Ovary (tissue), 10 donors: ENCODE measurements at regions of chr12 and their contacts with region 1.

Region 1: DNA sequence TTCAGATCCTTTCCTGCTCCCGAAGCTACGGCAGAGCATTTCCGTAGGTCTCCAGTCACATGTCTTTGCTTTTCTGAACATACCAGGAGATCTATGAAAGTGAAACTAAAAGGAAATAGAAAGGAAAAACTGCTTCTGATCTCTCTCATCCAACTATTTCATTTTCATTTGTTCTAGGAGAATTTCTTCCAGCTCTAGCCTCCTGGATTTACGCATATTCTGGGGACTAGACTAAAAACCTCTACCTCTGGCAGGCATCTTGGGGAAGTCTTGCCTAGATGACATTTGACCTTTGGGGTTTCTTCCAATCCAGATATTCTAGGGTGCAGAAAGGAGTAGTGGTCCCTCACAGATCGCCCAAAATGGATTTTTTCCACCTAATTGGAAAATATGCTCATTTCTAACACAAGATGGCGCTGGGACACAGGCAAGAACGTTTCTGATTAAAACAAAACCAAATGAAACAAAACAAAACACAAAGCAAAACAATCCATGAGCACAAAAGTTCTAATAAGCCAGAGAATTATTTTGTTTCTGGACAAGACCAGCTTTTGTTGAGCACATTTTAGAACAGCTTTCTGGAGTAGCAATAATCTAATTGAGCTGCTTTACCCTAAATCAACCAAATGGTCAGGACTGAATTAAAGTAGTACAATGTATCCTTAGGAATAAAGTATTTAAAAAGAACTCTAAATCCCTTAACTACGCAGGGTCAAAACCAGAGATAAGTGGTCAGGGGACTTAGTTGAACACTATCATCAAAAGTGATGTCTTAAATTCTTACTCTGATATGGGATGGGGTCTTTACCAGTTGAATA is 12.3 kb upstream of the PARP11 start:
- DNase-seq: peak in 3 of 5 donors; percentile 26 to 46 (median 29)
- H3K4me3 ChIP-seq: peak overlapping the region; percentile 43
- H3K27ac ChIP-seq: peak overlapping the region in 1 of 2 donors; percentile 67
- H3K4me1 ChIP-seq: peaks cover 2% of the 10 kb centered on the region
- H3K27me3 ChIP-seq: no peaks in the 10 kb centered on the region
- CTCF ChIP-seq: peak; percentile 72 to 92 (median 82)
- EP300 ChIP-seq: no peak
- POLR2A ChIP-seq: no peak

Region 2: DNA sequence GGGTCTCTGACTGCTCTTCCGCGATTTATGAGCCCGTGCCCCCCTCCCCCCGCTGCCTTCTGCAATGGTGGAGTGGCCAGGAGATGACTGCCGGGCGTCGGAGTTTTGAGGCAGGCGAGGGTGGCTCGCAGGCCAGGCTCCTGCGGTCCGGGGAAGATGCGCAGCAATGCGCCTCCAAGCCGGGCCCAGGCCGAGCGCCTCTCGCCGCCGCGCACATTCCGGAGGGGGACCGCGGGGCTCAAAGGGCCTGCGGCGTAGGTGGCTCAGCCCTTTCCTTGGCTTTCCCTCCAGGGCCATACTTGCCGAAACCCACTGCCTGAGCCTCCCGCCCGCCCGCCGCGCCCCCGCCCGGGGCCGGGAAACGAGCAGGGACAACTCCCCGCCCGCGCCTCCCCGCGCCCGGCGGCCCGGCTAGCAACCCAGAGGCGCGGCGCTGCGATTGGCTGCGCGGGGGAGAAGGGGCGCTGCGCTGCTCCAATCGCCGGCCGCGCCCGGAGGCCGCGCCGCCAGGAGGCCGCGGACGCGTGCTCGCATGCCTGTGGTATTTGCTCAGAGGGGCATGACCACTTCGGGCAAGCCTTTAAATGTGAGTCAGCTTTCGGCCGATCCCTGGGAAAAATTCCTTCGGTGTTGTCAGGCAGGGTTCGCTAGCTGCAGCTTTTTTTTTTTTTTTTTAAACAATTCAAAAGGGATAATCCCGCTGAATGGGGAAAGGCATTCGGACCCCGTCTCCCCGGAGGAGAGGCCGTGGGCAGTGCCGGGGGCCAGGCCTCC is 145.6 kb after region 1 on chr12:
- intact Hi-C with region 1: loop called in 2 of 4 experiments (anchors 5 kb)
- DNase-seq: peak; percentile 77 to 90 (median 86)
- H3K4me3 ChIP-seq: peak overlapping the region; percentile 57
- H3K27ac ChIP-seq: peak overlapping the region; percentile 23 to 33
- H3K4me1 ChIP-seq: peaks cover 7% of the 10 kb centered on the region
- H3K27me3 ChIP-seq: no peaks in the 10 kb centered on the region
- CTCF ChIP-seq: peak in 1 of 3 donors; percentile 18
- EP300 ChIP-seq: no peak
- POLR2A ChIP-seq: no peak

Region 3: DNA sequence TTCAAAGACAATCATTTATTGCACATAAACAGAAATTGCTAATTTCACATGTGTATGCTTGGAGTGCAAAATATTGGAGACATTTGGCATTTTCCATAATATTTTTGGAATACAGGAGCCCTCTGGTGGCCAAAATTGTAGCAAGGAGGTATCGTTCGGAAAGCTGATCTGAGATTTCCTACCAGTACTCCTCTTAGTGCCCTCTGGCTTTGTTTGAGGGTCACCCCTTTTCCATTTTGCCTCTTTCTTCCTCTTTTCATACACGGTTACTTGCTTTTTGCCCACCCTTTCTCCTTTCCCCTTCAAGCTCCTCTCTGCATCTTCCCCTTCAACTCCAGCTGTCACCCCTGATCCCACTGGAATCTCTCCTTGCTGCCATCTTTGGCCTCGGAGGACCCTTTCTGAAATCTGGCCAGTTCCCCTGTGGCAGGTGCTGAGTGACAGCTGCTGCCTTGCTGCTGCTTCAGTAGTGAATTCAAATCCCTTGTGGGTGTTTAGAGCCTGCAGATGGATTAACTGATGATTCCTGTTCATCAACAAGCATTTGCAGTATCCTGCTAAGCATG is 152.3 kb after region 1 on chr12:
- intact Hi-C with region 1: loop called (anchors 5 to 10 kb)
- DNase-seq: peak in 4 of 5 donors; percentile 22 to 55 (median 43)
- H3K4me3 ChIP-seq: no peak overlapping the region
- H3K27ac ChIP-seq: no peak overlapping the region
- H3K4me1 ChIP-seq: no peaks in the 10 kb centered on the region
- H3K27me3 ChIP-seq: no peaks in the 10 kb centered on the region
- CTCF ChIP-seq: peak in 2 of 3 donors; percentile 49 to 77
- EP300 ChIP-seq: no peak
- POLR2A ChIP-seq: no peak

Region 4: DNA sequence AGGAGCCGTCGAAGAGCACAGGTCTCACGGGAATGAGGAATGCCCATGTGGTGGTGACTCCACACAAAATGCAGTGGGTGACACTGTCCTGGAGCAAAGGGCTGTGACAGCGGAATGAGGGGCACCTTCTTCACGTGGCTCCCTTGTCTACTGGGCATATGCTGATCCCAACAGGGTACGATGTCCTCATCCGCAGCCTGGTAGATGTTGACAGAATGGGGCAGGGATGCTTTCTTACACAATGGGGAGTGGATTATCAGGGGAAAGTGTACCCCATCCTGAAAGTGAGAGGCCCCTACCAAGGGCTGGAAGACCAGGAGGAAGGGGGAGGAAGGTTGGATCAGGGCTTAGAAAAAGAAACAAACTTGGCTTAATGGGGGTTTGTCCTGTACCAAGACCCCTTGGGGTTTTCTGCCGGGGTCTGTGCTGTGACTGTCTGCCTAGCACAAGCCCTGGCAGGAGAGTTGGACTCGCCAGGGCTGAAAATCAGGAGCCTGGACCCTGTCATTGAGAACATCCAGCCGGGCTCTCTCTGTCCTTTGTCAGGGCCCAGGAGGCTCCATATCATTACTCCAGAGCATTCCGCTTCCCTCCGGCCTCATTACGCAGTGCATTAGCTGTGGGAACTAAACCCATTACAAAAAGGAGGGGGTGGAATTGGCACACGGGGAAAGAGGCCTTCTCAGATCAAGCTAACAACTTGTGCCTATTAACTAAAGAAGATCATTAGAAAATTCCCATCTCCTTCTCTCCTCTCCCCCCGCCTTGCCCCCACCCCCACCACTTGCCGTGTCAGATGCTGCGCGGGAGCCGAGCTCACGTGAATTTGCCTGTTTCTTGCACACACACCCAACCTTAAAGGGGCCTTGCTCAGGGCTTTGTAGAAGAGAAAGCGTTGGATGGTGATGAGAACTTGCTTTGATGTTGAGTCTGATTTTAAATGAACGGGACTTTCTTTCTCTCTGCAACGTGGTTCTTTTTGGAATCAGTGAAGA is 159.5 kb after region 1 on chr12:
- intact Hi-C with region 1: loop called in 2 of 4 experiments (anchors 5 to 10 kb)
- DNase-seq: no peak
- H3K4me3 ChIP-seq: no peak overlapping the region
- H3K27ac ChIP-seq: no peak overlapping the region
- H3K4me1 ChIP-seq: no peaks in the 10 kb centered on the region
- H3K27me3 ChIP-seq: no peaks in the 10 kb centered on the region
- CTCF ChIP-seq: no peak
- EP300 ChIP-seq: no peak
- POLR2A ChIP-seq: no peak

Region 5: GRCh38 chr12:4320853-4321701 is 435.6 kb after region 1 on chr12 and contains the start of gene TIGAR:
- intact Hi-C with region 1: no loop called
- DNase-seq: peak; percentile 86 to 93 (median 87)
- H3K4me3 ChIP-seq: peak within 1 kb of the TSS; percentile 86
- H3K27ac ChIP-seq: no peak within 1 kb of the TSS
- H3K4me1 ChIP-seq: peaks cover 4% of the 10 kb centered on the region
- H3K27me3 ChIP-seq: no peaks in the 10 kb centered on the region
- CTCF ChIP-seq: no peak
- EP300 ChIP-seq: no peak
- POLR2A ChIP-seq: peak; percentile 6
- total RNA-seq, gene TIGAR: 0.36 to 10.3 (median 4.1) TPM